ENCODE measurements at regions of chr20 and their contacts with region 1.

Region 1: GRCh38 chr20:3716195-3716834 is 3.9 kb upstream of the SIGLEC1 start:
- H3K4me3 ChIP-seq: no peak overlapping the region
- H3K27ac ChIP-seq: 0 out of 2 replicates have a peak overlapping the region, but pooled peaks have one; percentile 18
- H3K4me1 ChIP-seq: no peaks in the 10 kb centered on the region
- CTCF ChIP-seq: peak; percentile 59; the same call in 1 of the 2 replicates

Region 2: GRCh38 chr20:3551681-3552434 is 164.5 kb before region 1 on chr20:
- CTCF ChIA-PET with region 1: no interaction called
- POLR2A ChIA-PET with region 1: no interaction called
- H3K4me3 ChIP-seq: no peak overlapping the region
- H3K27ac ChIP-seq: no peak overlapping the region
- H3K4me1 ChIP-seq: no peaks in the 10 kb centered on the region
- CTCF ChIP-seq: no peak

Region 3: GRCh38 chr20:3727401-3728021 is 11.2 kb after region 1 on chr20:
- CTCF ChIA-PET with region 1: interaction called, 14 read pairs
- POLR2A ChIA-PET with region 1: no interaction called
- H3K4me3 ChIP-seq: peak overlapping the region; percentile 6; the same call in 1 of the 2 replicates
- H3K27ac ChIP-seq: no peak overlapping the region
- H3K4me1 ChIP-seq: peaks cover 10% of the 10 kb centered on the region
- CTCF ChIP-seq: no peak

Region 4: GRCh38 chr20:3753098-3753980 is 37.0 kb after region 1 on chr20:
- CTCF ChIA-PET with region 1: interaction called, 26 read pairs
- POLR2A ChIA-PET with region 1: no interaction called
- H3K4me3 ChIP-seq: no peak overlapping the region
- H3K27ac ChIP-seq: no peak overlapping the region
- H3K4me1 ChIP-seq: peaks cover 4% of the 10 kb centered on the region; the same call in 1 of the 2 replicates
- CTCF ChIP-seq: peak; percentile 64; the same call in 1 of the 2 replicates

Region 5: DNA sequence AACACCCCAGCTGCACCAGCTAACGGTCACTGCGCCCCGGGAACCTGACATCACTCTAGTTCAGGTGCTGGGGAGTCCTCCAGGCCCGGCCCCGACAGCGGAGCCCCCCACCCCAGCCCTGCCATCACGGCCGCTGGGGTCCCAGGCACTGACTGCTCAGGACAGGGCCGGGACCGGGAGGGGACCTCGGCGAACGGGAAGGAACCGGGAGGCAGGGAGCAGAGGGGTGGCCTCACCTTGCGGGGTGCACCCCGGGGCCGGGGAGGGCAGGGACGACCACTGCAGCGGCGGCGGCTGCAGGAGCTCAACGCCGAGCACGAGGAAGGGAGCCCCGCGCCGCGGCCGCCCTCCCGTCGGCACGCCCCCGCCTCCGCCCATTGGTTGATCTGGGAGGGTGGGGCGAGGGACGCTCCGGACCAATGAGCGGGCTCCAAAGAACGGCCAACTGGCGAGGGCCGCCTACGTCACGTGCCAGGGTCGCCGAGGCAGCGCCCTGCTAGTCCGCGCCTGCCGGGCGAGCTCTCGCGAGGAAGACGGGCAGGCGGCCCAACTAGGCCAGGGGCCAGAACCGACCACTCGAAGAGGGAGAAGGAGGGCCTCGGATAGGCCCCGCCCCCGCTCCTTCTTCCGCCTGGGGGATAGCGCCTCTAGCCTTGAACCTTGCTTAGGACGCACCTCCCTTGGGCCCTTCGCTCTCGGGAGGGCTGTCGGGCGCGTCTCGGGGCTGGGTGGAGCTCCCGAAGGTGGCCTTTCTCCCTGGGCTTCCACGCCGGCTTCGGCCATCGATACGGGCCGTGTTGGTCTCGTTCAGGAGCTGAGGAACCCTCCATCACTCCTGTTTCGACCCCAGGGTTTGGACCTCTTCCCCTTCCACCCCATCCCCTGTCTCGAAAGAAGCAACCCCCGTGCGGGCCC is 51.4 kb after region 1 on chr20 and contains the start of gene ADISSP:
- CTCF ChIA-PET with region 1: interaction called, 20 read pairs
- POLR2A ChIA-PET with region 1: interaction called, 8 read pairs
- H3K4me3 ChIP-seq: peak within 1 kb of the TSS; percentile 74
- H3K27ac ChIP-seq: peak within 1 kb of the TSS; percentile 68
- H3K4me1 ChIP-seq: peaks cover 7% of the 10 kb centered on the region
- CTCF ChIP-seq: peak; percentile 44; the same call in 1 of the 2 replicates

Region 6: GRCh38 chr20:3854462-3854871 is 138.2 kb after region 1 on chr20:
- CTCF ChIA-PET with region 1: interaction called, 10 read pairs
- POLR2A ChIA-PET with region 1: no interaction called
- H3K4me3 ChIP-seq: no peak overlapping the region
- H3K27ac ChIP-seq: no peak overlapping the region
- H3K4me1 ChIP-seq: no peaks in the 10 kb centered on the region
- CTCF ChIP-seq: no peak